ENCODE measurements at regions of chr1 and their contacts with region 1.

Region 1: GRCh38 chr1:235601104-235601503 is 48.5 kb downstream of the GNG4 start:
- DNase-seq: peak; percentile 44
- ATAC-seq: no peak
- H3K4me3 Mint-ChIP-seq: no peak overlapping the region
- H3K27ac Mint-ChIP-seq: no peak overlapping the region
- H3K4me1 Mint-ChIP-seq: no peaks in the 10 kb centered on the region
- H3K27me3 Mint-ChIP-seq: peaks cover 7% of the 10 kb centered on the region

Region 2: DNA sequence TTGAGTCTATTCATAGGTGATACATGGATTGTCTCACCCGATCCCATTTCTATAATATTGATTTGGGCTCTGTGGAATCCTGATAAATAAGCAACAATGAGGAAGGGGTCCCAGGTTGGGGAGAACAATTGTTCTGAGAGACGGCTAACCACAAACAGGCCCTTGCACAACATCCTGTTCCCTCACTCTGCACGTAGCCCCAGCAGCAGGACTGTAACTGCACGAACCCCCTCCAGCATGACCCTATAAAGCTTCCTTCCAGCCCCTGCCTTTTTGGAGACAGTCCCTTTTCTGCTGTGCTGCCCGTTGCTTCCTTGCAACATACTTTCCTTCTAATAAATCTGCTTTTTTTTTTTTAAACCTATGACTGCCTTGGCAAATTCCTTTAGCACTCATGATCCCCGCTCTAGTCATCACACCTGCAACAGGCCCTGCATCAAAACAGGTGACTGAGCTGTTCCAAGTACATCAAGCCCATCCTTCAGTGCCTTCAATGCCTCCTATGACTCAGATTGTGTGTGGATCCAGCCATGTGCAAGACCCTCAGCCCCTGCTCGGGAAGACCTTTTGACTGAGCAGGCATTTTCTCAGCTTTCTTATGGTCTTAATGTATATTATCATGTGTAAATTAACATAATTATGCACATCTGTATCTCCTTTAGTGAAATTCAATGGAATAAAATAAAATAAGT is 33.1 kb before region 1 on chr1:
- CTCF ChIA-PET with region 1: no interaction called
- DNase-seq: peak; percentile 69
- ATAC-seq: peak; percentile 83
- H3K4me3 Mint-ChIP-seq: no peak overlapping the region
- H3K27ac Mint-ChIP-seq: peak overlapping the region; percentile 66
- H3K4me1 Mint-ChIP-seq: peaks cover 14% of the 10 kb centered on the region
- H3K27me3 Mint-ChIP-seq: no peaks in the 10 kb centered on the region

Region 3: GRCh38 chr1:235588916-235589515 is 12.1 kb before region 1 on chr1:
- CTCF ChIA-PET with region 1: interaction called, 10 read pairs
- DNase-seq: no peak
- ATAC-seq: no peak
- H3K4me3 Mint-ChIP-seq: no peak overlapping the region
- H3K27ac Mint-ChIP-seq: no peak overlapping the region
- H3K4me1 Mint-ChIP-seq: peaks cover 7% of the 10 kb centered on the region
- H3K27me3 Mint-ChIP-seq: peaks cover 41% of the 10 kb centered on the region

Region 4: DNA sequence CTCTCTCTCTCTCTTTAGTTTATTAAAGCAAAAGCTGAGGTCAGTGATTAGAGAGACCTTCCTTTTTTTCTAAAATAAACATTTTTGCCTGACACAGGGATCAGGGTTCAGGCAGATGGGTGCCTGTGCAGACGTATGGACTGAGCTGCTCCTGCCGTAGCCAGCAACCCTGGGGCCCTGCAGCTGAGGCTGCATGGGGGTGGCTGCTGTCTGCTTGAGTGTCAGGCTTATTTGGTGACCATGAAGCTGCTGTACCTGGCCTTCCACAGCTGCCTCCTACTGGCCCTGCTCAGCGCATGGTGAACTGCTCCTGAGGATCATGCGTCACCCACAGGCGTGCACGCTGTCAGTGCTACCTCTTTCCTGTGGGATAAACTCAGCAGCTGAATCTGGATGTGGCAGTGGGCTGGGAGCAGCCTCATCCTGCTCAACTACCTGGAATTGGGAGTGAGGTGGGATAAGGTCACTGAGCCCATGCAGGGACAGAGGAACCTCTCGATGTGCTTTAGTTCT is 13.4 kb after region 1 on chr1:
- CTCF ChIA-PET with region 1: interaction called, 15 read pairs
- DNase-seq: no peak
- ATAC-seq: no peak
- H3K4me3 Mint-ChIP-seq: no peak overlapping the region
- H3K27ac Mint-ChIP-seq: no peak overlapping the region
- H3K4me1 Mint-ChIP-seq: no peaks in the 10 kb centered on the region
- H3K27me3 Mint-ChIP-seq: peaks cover 16% of the 10 kb centered on the region